SK-N-SH (cell line): ENCODE measurements at regions of chr3 and their contacts with region 1.

Region 1: DNA sequence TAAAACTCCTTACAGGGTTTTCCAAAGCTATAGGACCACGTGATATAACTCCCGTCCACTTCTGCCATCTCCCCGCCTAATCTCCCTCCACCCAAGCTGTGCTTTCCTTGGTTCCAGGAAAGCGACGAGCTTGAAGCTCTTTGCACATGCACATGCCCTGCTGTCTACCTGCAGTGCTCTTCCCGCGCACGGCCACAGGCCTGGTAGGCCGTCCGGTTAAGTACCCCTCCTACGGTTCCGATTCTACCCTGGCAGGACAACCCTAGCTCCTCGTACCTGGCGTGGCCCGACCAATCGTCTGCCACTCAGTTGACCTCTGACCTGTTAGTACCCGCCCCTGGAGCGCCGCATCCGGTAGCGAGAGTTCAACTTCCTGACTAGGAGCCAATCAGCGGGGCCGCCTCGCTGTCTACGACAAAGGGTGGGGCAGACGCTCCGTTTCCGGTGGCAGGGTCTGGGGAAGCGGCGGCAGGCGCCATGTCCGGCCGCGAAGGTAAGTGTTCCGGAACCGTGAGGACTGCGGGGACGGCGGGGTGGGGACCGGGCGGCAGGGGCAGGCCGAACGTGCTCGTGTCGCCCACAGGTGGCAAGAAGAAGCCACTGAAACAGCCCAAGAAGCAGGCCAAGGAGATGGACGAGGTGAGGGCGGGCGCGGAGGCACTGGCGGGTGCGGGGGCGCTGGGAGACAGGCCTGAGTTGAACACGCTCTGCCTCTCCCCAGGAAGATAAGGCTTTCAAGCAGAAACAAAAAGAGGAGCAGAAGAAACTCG is at the starts of genes CCDC51 and TMA7:
- DNase-seq: peak; percentile 98
- H3K4me3 ChIP-seq: peak within 1 kb of the TSS; percentile 79 to 86
- H3K27ac ChIP-seq: peak within 1 kb of the TSS; percentile 64 to 86
- H3K4me1 ChIP-seq: peaks cover 8 to 20% of the 10 kb centered on the region in 2 experiments
- H3K27me3 ChIP-seq: no peaks in the 10 kb centered on the region
- CTCF ChIP-seq: no peak
- EP300 ChIP-seq: 0 out of 4 replicates have a peak, but pooled peaks of 1 of the 2 experiments have one; percentile 20
- RAD21 ChIP-seq: no peak
- polyA plus RNA-seq, gene CCDC51: 24.2 and 29.6 TPM in 2 replicates
- polyA plus RNA-seq, gene TMA7: 393 and 438 TPM in 2 replicates

Region 2: GRCh38 chr3:47996440-47996839 is 443.6 kb before region 1 on chr3:
- CTCF ChIA-PET with region 1: no interaction called
- POLR2A ChIA-PET with region 1: no interaction called
- DNase-seq: no peak
- H3K4me3 ChIP-seq: no peak overlapping the region
- H3K27ac ChIP-seq: no peak overlapping the region
- H3K4me1 ChIP-seq: no peaks in the 10 kb centered on the region
- H3K27me3 ChIP-seq: no peaks in the 10 kb centered on the region
- CTCF ChIP-seq: no peak
- EP300 ChIP-seq: no peak
- RAD21 ChIP-seq: no peak

Region 3: DNA sequence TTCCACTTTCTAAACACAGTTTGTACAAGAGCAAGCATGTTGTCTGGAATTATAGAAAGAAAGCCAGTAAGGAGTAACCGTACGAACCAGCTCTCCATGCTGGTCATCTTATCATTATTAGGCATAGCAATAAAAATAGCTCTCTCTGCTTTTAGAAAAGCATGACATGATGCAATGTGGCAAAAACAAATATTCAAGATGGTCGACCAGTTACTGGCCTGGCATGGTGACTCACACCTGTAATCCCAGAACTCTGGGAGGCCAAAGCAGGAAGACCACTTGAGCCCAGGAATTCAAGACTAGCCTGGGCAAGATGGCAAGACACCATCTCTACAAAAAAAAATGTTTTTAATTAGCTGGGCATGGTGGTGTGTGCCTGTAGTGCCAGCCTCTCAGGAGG is 421.2 kb before region 1 on chr3:
- CTCF ChIA-PET with region 1: no interaction called
- POLR2A ChIA-PET with region 1: no interaction called
- DNase-seq: no peak
- H3K4me3 ChIP-seq: no peak overlapping the region
- H3K27ac ChIP-seq: peak overlapping the region in 1 of 2 experiments; percentile 84; a peak in 2 of 4 replicates
- H3K4me1 ChIP-seq: peaks cover 26 to 54% of the 10 kb centered on the region in 2 experiments
- H3K27me3 ChIP-seq: no peaks in the 10 kb centered on the region
- CTCF ChIP-seq: no peak
- EP300 ChIP-seq: peak in 1 of 2 experiments; percentile 58; a peak in 1 of 4 replicates
- RAD21 ChIP-seq: no peak

Region 4: GRCh38 chr3:48194446-48195071 is 245.4 kb before region 1 on chr3:
- CTCF ChIA-PET with region 1: interaction called, 93 read pairs
- POLR2A ChIA-PET with region 1: interaction called, 5 read pairs
- DNase-seq: peak; percentile 82
- H3K4me3 ChIP-seq: peak overlapping the region in 1 of 2 experiments; percentile 42; a peak in 1 of 4 replicates
- H3K27ac ChIP-seq: no peak overlapping the region
- H3K4me1 ChIP-seq: no peaks in the 10 kb centered on the region
- H3K27me3 ChIP-seq: no peaks in the 10 kb centered on the region
- CTCF ChIP-seq: peak; percentile 91
- EP300 ChIP-seq: no peak
- RAD21 ChIP-seq: peak; percentile 80

Region 5: GRCh38 chr3:48256557-48256956 is 183.4 kb before region 1 on chr3:
- CTCF ChIA-PET with region 1: interaction called, 39 read pairs
- POLR2A ChIA-PET with region 1: no interaction called
- DNase-seq: no peak
- H3K4me3 ChIP-seq: no peak overlapping the region
- H3K27ac ChIP-seq: no peak overlapping the region
- H3K4me1 ChIP-seq: no peaks in the 10 kb centered on the region
- H3K27me3 ChIP-seq: no peaks in the 10 kb centered on the region
- CTCF ChIP-seq: no peak
- EP300 ChIP-seq: no peak
- RAD21 ChIP-seq: no peak

Region 6: GRCh38 chr3:48301020-48301796 is 138.8 kb before region 1 on chr3:
- CTCF ChIA-PET with region 1: interaction called, 18 read pairs
- POLR2A ChIA-PET with region 1: interaction called, 3 read pairs
- DNase-seq: peak; percentile 96
- H3K4me3 ChIP-seq: peak within 1 kb of the TSS; percentile 70 to 79
- H3K27ac ChIP-seq: peak within 1 kb of the TSS; percentile 80 to 96
- H3K4me1 ChIP-seq: peaks cover 3 to 12% of the 10 kb centered on the region in 2 experiments; a peak in 2 of 4 replicates
- H3K27me3 ChIP-seq: no peaks in the 10 kb centered on the region
- CTCF ChIP-seq: no peak
- EP300 ChIP-seq: no peak
- RAD21 ChIP-seq: no peak

Region 7: GRCh38 chr3:48352547-48352946 is 87.5 kb before region 1 on chr3:
- CTCF ChIA-PET with region 1: interaction called, 31 read pairs
- POLR2A ChIA-PET with region 1: no interaction called
- DNase-seq: peak; percentile 64
- H3K4me3 ChIP-seq: no peak overlapping the region
- H3K27ac ChIP-seq: peak overlapping the region in 1 of 2 experiments; percentile 97; a peak in 2 of 4 replicates
- H3K4me1 ChIP-seq: peaks cover 0 to 29% of the 10 kb centered on the region in 2 experiments; a peak in 2 of 4 replicates
- H3K27me3 ChIP-seq: no peaks in the 10 kb centered on the region
- CTCF ChIP-seq: no peak
- EP300 ChIP-seq: peak in 1 of 2 experiments; percentile 95; a peak in 2 of 4 replicates
- RAD21 ChIP-seq: peak; percentile 36

Region 8: GRCh38 chr3:48429317-48429959 is 10.6 kb before region 1 on chr3:
- CTCF ChIA-PET with region 1: interaction called, 156 read pairs
- POLR2A ChIA-PET with region 1: interaction called, 11 read pairs
- DNase-seq: peak; percentile 93
- H3K4me3 ChIP-seq: peak overlapping the region; percentile 73 to 79
- H3K27ac ChIP-seq: peak overlapping the region; percentile 54 to 89; a peak in 3 of 4 replicates
- H3K4me1 ChIP-seq: peaks cover 7 to 49% of the 10 kb centered on the region in 2 experiments; a peak in 2 of 4 replicates
- H3K27me3 ChIP-seq: no peaks in the 10 kb centered on the region
- CTCF ChIP-seq: no peak
- EP300 ChIP-seq: no peak
- RAD21 ChIP-seq: no peak

Region 9: DNA sequence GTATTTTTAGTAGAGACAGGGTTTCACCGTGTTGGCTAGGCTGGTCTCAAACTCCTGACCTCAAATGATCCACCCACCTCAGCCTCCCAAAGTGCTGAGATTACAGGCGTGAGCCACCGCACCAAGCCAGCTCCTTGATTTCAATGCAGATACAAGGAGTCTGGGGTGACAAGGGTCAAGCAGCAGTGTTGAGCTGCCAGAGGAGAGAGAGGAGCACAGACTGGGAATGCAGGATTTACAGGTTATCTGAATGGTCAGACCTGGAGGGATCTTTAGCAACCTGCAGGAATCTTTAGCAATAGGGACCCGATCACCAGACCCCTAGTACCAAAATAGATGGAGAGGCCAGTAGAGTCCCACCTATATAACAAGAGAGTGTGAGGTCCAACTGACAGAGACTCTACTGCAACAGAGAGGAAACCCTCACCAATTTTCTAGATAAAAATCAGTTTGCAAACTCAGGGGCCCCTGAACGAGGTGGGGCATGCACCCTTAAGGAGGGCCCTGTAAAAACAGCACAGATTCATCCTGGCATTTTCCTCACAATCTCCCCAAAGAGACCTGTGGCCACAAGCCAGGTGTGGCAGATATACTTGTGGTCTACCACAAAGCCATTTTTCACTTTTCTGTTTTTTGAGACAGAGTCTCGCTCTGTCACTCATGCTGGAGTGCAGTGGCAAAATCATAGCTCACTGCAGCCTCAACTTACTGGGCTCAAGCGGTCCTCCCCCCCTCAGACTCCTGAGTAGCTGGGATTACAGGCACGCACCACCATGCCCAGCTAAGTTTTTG is 74.6 kb after region 1 on chr3:
- CTCF ChIA-PET with region 1: interaction called, 10 read pairs
- POLR2A ChIA-PET with region 1: no interaction called
- DNase-seq: no peak
- H3K4me3 ChIP-seq: no peak overlapping the region
- H3K27ac ChIP-seq: no peak overlapping the region
- H3K4me1 ChIP-seq: no peaks in the 10 kb centered on the region
- H3K27me3 ChIP-seq: no peaks in the 10 kb centered on the region
- CTCF ChIP-seq: no peak
- EP300 ChIP-seq: no peak
- RAD21 ChIP-seq: no peak